HCT116 (cell line): ENCODE measurements at regions of chr3 and their contacts with region 1.

Region 1: GRCh38 chr3:114649331-114649730 is 355.5 kb downstream of the TIGIT start:
- DNase-seq: peak; percentile 97
- ATAC-seq: peak; percentile 74
- H3K4me3 ChIP-seq: peak overlapping the region in 1 of 2 experiments; percentile 11; a peak in 1 of 4 replicates
- H3K27ac ChIP-seq: peak overlapping the region; percentile 97
- H3K4me1 ChIP-seq: peaks cover 79 to 95% of the 10 kb centered on the region in 2 experiments
- H3K27me3 ChIP-seq: no peaks in the 10 kb centered on the region
- CTCF ChIP-seq: no peak
- POLR2A ChIP-seq: no peak
- RAD21 ChIP-seq: no peak; the same call in none of the 2 replicates

Region 2: GRCh38 chr3:114408736-114409670 is 240.3 kb before region 1 on chr3:
- CTCF ChIA-PET with region 1: no interaction called
- POLR2A ChIA-PET with region 1: no interaction called
- RAD21 ChIA-PET with region 1: no interaction called
- intact Hi-C with region 1: loop called (anchors 10 kb)
- DNase-seq: no peak
- ATAC-seq: no peak
- H3K4me3 ChIP-seq: no peak overlapping the region
- H3K27ac ChIP-seq: no peak overlapping the region
- H3K4me1 ChIP-seq: peaks cover 49 to 87% of the 10 kb centered on the region in 2 experiments
- H3K27me3 ChIP-seq: no peaks in the 10 kb centered on the region
- CTCF ChIP-seq: no peak
- POLR2A ChIP-seq: no peak
- RAD21 ChIP-seq: no peak

Region 3: GRCh38 chr3:114551770-114552526 is 97.4 kb before region 1 on chr3:
- CTCF ChIA-PET with region 1: no interaction called
- POLR2A ChIA-PET with region 1: interaction called, 3 read pairs
- RAD21 ChIA-PET with region 1: no interaction called
- intact Hi-C with region 1: loop called (anchors 5 kb)
- DNase-seq: peak; percentile 85
- ATAC-seq: peak; percentile 90
- H3K4me3 ChIP-seq: peak overlapping the region in 1 of 2 experiments; percentile 23; a peak in 2 of 4 replicates
- H3K27ac ChIP-seq: peak overlapping the region; percentile 87
- H3K4me1 ChIP-seq: peaks cover 71 to 72% of the 10 kb centered on the region in 2 experiments
- H3K27me3 ChIP-seq: no peaks in the 10 kb centered on the region
- CTCF ChIP-seq: no peak
- POLR2A ChIP-seq: no peak
- RAD21 ChIP-seq: peak; percentile 15; the same call in 1 of the 2 replicates

Region 4: DNA sequence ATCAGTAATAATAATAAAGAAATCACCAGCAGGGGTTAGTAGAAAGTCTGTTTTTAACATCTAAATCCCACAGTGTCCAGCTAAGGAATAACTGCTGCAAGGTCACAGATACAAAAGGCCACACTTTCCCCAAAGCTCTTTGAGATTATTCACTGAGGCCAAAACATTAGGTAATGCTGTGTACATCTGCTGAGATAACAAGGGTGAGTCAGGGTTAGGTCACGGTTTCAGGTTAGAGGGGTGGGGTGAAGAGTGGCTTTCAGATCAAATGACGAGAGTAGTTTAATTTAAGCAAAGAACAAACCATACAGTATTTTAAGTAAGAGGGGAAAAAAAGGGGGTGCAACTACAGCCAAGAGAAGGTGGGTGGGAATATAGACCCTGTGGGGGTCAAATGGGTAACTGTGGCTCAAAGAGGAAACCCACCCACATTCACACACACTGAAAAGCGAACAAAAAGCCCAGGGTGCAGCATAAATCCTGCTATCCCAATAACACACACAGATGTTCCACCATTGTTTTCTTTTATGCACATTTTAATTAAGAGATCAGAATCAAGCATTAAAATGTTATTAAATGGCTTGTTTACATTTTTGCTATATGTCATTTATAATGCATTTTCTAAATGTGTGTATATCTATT is 57.4 kb after region 1 on chr3:
- CTCF ChIA-PET with region 1: no interaction called
- POLR2A ChIA-PET with region 1: no interaction called
- RAD21 ChIA-PET with region 1: no interaction called
- intact Hi-C with region 1: loop called (anchors 5 kb)
- DNase-seq: peak; percentile 88
- ATAC-seq: peak; percentile 89
- H3K4me3 ChIP-seq: peak overlapping the region in 1 of 2 experiments; percentile 23; a peak in 2 of 4 replicates
- H3K27ac ChIP-seq: peak overlapping the region; percentile 79
- H3K4me1 ChIP-seq: peaks cover 57 to 86% of the 10 kb centered on the region in 2 experiments
- H3K27me3 ChIP-seq: no peaks in the 10 kb centered on the region
- CTCF ChIP-seq: no peak
- POLR2A ChIP-seq: no peak
- RAD21 ChIP-seq: peak; percentile 52

Region 5: GRCh38 chr3:114756506-114757279 is 107.4 kb after region 1 on chr3:
- CTCF ChIA-PET with region 1: no interaction called
- POLR2A ChIA-PET with region 1: interaction called, 3 read pairs
- RAD21 ChIA-PET with region 1: no interaction called
- intact Hi-C with region 1: loop called (anchors 5 kb)
- DNase-seq: peak; percentile 61
- ATAC-seq: peak; percentile 60
- H3K4me3 ChIP-seq: peak overlapping the region; percentile 25 to 62
- H3K27ac ChIP-seq: peak overlapping the region; percentile 83; the same call in 1 of the 2 replicates
- H3K4me1 ChIP-seq: peaks cover 52 to 76% of the 10 kb centered on the region in 2 experiments
- H3K27me3 ChIP-seq: no peaks in the 10 kb centered on the region
- CTCF ChIP-seq: no peak
- POLR2A ChIP-seq: no peak
- RAD21 ChIP-seq: peak; percentile 23